ENCODE measurements at regions of chr17 and their contacts with region 1.

Region 1: GRCh38 chr17:4366327-4367063 is at the start of gene UBE2G1:
- DNase-seq: peak; percentile 99
- ATAC-seq: peak; percentile 86
- H3K4me3 Mint-ChIP-seq: peak within 1 kb of the TSS; percentile 65
- H3K27ac Mint-ChIP-seq: peak within 1 kb of the TSS; percentile 90
- H3K4me1 Mint-ChIP-seq: peaks cover 29% of the 10 kb centered on the region
- H3K27me3 Mint-ChIP-seq: no peaks in the 10 kb centered on the region
- total RNA-seq, gene UBE2G1: 51.0 to 52.9 TPM

Region 2: GRCh38 chr17:3845621-3846441 is 520.7 kb before region 1 on chr17 and contains the start of gene NCBP3:
- CTCF ChIA-PET with region 1: no interaction called
- POLR2A ChIA-PET with region 1: no interaction called
- intact Hi-C with region 1: loop called in 1 of 2 experiments (anchors 1 kb)
- DNase-seq: peak; percentile 96
- ATAC-seq: peak; percentile 93
- H3K4me3 Mint-ChIP-seq: peak within 1 kb of the TSS; percentile 84
- H3K27ac Mint-ChIP-seq: peak within 1 kb of the TSS; percentile 91
- H3K4me1 Mint-ChIP-seq: peaks cover 19% of the 10 kb centered on the region
- H3K27me3 Mint-ChIP-seq: no peaks in the 10 kb centered on the region
- total RNA-seq, gene NCBP3: 35.9 to 44.6 TPM

Region 3: GRCh38 chr17:4215882-4216570 is 150.5 kb before region 1 on chr17:
- CTCF ChIA-PET with region 1: interaction called, 3 read pairs
- POLR2A ChIA-PET with region 1: no interaction called
- intact Hi-C with region 1: loop called in 1 of 2 experiments (anchors 1 kb)
- DNase-seq: no peak
- ATAC-seq: no peak
- H3K4me3 Mint-ChIP-seq: no peak overlapping the region
- H3K27ac Mint-ChIP-seq: peak overlapping the region; percentile 3
- H3K4me1 Mint-ChIP-seq: peaks cover 7% of the 10 kb centered on the region
- H3K27me3 Mint-ChIP-seq: no peaks in the 10 kb centered on the region

Region 4: GRCh38 chr17:4498461-4499397 is 132.2 kb after region 1 on chr17 and contains the start of gene SPNS2:
- CTCF ChIA-PET with region 1: no interaction called
- POLR2A ChIA-PET with region 1: no interaction called
- intact Hi-C with region 1: no loop called
- DNase-seq: peak; percentile 75
- ATAC-seq: peak; percentile 91
- H3K4me3 Mint-ChIP-seq: peak within 1 kb of the TSS; percentile 65
- H3K27ac Mint-ChIP-seq: no peak within 1 kb of the TSS
- H3K4me1 Mint-ChIP-seq: peaks cover 13% of the 10 kb centered on the region
- H3K27me3 Mint-ChIP-seq: peaks cover 30% of the 10 kb centered on the region
- total RNA-seq, gene SPNS2: 0.07 to 0.37 TPM

Region 5: DNA sequence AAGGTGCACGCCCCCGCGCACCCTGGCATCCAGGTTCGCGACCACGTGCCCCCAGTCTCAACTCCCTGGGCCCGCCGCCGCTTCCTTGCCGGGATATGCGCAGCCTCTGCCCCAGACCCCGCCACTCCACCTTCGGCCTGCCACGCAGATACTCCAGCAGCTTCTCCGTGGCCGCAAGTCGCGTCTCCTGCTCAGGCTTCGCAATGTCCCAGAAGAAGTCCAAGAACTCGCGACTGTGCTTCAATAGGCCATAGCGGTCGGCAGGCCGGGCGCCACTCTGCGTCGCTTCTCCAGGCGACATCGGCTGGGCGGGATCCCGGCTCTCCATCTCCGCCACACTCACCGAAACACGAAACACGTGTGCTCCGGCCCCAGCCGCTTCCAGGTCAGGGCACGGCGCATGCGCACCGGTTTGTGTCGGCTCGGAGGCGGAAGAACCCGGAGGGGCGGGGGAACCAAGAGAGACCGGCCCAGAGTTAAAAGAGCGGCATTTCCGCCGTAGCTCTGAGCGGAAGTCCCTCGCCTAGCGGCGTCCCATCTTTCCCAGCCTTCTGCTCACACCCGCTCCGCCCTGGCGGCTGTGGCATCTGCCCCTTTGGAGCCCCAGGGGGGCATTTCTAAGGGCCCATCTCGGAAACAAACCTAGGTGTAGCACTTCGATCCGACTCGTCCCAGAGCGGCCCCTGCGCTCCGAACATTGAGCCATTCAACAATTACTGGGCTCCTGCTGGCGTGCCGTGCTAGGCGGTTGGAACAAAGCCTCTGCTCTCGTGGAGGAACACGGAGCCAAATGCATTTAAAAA is 188.7 kb after region 1 on chr17 and contains the start of gene MYBBP1A:
- CTCF ChIA-PET with region 1: no interaction called
- POLR2A ChIA-PET with region 1: no interaction called
- intact Hi-C with region 1: loop called in 1 of 2 experiments (anchors 5 kb)
- DNase-seq: peak; percentile 99
- ATAC-seq: peak; percentile 97
- H3K4me3 Mint-ChIP-seq: peak within 1 kb of the TSS; percentile 93
- H3K27ac Mint-ChIP-seq: peak within 1 kb of the TSS; percentile 96
- H3K4me1 Mint-ChIP-seq: peaks cover 21% of the 10 kb centered on the region
- H3K27me3 Mint-ChIP-seq: no peaks in the 10 kb centered on the region
- total RNA-seq, gene MYBBP1A: 97.7 to 144 TPM

Region 6: DNA sequence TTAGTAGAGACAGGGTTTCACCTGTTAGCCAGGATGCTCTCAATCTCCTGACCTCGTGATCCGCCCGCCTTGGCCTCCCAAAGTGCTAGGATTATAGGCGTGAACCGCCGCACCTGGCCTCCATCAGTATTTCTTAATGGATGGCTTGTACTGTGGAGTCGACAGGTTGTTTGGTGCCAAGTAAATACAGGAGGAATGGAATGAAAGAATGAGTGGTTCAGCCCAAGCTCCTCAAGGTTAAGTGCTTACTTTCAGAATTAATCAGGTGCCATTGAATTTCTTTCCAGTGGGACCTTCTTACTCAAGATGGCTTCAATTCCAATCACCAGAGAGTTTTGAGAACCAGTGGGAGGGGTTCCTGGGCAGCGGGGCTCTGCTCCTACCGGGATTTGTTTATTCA is 250.0 kb after region 1 on chr17:
- CTCF ChIA-PET with region 1: no interaction called
- POLR2A ChIA-PET with region 1: no interaction called
- intact Hi-C with region 1: no loop called
- DNase-seq: no peak
- ATAC-seq: no peak
- H3K4me3 Mint-ChIP-seq: no peak overlapping the region
- H3K27ac Mint-ChIP-seq: no peak overlapping the region
- H3K4me1 Mint-ChIP-seq: no peaks in the 10 kb centered on the region
- H3K27me3 Mint-ChIP-seq: peaks cover 8% of the 10 kb centered on the region

Region 7: DNA sequence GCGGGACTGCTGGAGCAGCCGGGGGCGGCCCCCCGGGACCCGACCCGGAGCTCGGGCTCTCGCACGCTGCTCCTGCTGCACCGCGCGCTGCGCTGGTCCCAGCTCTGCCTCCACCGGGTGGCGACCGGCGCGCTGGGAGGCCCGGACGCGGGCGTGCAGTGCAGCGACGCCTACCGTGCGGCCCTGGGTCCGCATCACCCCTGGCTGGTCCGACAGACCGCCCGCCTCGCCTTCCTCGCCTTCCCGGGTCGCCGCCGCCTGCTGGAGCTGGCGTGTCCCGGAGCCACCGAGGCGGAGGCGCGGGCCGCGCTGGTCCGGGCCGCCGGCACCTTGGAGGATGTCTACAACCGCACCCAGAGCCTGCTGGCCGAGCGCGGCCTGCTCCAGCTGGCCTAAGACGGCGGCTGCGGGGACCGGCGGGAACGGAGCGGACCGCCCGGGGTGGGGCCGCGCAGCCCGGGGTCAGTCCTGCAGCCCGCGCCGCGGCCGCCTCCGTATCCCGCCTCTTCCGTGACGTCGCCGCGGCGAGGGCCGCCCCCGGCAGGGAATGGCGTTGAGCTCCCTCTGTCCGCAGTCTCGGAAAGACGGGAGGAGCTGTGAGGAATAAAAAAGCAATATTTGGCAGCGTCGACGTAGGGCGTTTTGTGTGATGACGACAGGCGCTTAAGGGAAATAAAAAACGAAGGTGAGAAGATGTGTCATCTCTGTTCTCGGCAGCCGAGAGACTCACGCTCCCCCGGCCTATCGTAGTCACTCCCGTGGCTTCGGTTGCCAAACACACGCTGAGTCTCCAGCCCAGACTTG is 423.6 kb after region 1 on chr17:
- CTCF ChIA-PET with region 1: no interaction called
- POLR2A ChIA-PET with region 1: no interaction called
- intact Hi-C with region 1: loop called in 1 of 2 experiments (anchors 5 kb)
- DNase-seq: peak; percentile 92
- ATAC-seq: peak; percentile 91
- H3K4me3 Mint-ChIP-seq: peak overlapping the region; percentile 64
- H3K27ac Mint-ChIP-seq: peak overlapping the region; percentile 93
- H3K4me1 Mint-ChIP-seq: peaks cover 25% of the 10 kb centered on the region
- H3K27me3 Mint-ChIP-seq: peaks cover 34% of the 10 kb centered on the region

Measured in activated CD4-positive, alpha-beta T cell treated with anti-CD3 and anti-CD28 coated beads for 36 hours (primary cell).